ENCODE measurements at regions of chr3 and their contacts with region 1.

Region 1: DNA sequence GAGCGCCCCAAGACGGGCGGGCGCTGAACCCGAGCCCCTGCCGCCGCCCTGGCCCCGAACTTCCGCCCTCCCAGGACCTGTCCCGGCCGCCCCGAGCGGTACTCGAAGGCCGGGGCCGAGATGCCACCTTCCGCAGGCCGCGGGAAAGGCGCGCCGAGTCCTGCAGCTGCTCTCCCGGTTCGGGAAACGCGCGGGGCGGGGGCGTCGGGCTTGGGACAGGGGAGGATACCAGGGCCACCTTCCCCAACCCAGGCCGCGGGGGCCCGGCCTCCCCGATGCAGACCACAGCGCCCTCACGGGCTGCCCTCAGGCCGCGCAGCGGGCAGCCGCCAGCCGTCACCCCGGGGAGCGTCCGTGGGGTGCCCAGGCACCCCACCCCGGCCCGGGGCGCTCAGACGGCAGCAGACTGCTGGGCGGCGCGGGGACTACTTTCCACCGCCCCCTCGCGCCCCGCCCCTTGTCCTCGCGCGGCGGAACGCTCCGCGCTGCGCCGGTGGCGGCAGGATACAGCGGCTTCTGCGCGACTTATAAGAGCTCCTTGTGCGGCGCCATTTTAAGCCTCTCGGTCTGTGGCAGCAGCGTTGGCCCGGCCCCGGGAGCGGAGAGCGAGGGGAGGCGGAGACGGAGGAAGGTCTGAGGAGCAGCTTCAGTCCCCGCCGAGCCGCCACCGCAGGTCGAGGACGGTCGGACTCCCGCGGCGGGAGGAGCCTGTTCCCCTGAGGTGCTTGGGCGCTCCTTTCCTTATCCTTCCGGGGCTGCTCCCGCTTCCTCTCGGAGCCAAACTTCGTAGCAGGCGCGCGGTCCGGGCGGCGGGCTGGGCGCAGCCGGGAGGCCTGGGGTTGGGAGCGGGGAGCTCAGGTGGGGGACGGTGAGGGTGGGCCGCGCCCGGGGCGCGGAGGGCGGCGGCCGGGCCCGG is at the start of gene CTNNB1:
- DNase-seq: peak; percentile 87 to 96 (median 90)
- ATAC-seq: peak; percentile 81
- H3K4me3 ChIP-seq: peak within 1 kb of the TSS; percentile 95 to 98
- H3K4me3 Mint-ChIP-seq: peak within 1 kb of the TSS; percentile 96
- H3K27ac ChIP-seq: peak within 1 kb of the TSS; percentile 88 to 95
- H3K27ac Mint-ChIP-seq: peak within 1 kb of the TSS; percentile 97
- H3K4me1 ChIP-seq: peaks cover 40% of the 10 kb centered on the region
- H3K4me1 Mint-ChIP-seq: peaks cover 37% of the 10 kb centered on the region
- H3K27me3 ChIP-seq: no peaks in the 10 kb centered on the region
- H3K27me3 Mint-ChIP-seq: no peaks in the 10 kb centered on the region
- CTCF ChIP-seq: no peak
- total RNA-seq, gene CTNNB1: 206 to 225 TPM

Region 2: DNA sequence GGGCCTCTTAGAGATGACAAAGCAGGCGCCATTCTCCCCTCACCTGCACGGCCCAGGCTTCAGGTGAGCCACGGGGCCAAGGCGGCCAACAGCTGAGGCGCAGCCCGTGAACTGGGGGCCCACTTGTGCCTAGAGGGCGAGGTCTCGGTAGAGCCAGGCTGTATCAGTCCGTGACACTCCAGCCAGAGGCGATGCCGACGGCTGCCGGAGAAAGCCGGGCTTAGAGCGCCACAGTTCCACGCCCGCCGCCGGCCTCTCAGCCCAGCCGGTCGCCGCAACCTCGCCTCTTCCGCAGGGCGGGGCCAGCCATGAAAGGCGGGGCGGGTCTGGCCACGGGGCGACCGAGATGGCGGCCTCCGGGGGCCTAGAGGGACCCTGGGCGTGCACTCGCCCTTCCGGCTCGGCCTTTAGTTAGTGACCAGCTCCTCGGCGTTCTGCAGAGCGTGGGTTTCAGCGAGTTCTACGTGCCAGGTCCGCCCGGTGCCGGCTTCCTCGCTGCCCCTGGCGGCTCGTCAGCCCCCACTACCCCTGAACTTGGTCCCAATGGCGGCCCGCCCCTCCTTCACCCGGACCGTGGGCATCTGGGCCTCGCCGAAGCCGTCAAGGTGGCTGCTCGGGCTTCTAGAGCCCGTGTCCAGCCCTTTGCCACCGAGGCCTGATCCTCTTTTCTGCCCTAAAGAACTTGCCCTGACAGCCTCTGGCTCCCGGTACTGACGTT is 674.5 kb before region 1 on chr3 and contains the start of gene ZNF621:
- CTCF ChIA-PET with region 1: no interaction called
- POLR2A ChIA-PET with region 1: no interaction called
- intact Hi-C with region 1: loop called in 1 of 2 experiments (anchors 1 kb)
- DNase-seq: peak; percentile 69 to 90 (median 84)
- ATAC-seq: peak; percentile 97
- H3K4me3 ChIP-seq: peak within 1 kb of the TSS; percentile 76 to 97
- H3K4me3 Mint-ChIP-seq: peak within 1 kb of the TSS; percentile 94
- H3K27ac ChIP-seq: peak within 1 kb of the TSS; percentile 80 to 94
- H3K27ac Mint-ChIP-seq: peak within 1 kb of the TSS; percentile 97
- H3K4me1 ChIP-seq: peaks cover 12% of the 10 kb centered on the region
- H3K4me1 Mint-ChIP-seq: peaks cover 38% of the 10 kb centered on the region
- H3K27me3 ChIP-seq: no peaks in the 10 kb centered on the region
- H3K27me3 Mint-ChIP-seq: no peaks in the 10 kb centered on the region
- CTCF ChIP-seq: no peak
- total RNA-seq, gene ZNF621: 7.1 to 9.7 TPM

Region 3: DNA sequence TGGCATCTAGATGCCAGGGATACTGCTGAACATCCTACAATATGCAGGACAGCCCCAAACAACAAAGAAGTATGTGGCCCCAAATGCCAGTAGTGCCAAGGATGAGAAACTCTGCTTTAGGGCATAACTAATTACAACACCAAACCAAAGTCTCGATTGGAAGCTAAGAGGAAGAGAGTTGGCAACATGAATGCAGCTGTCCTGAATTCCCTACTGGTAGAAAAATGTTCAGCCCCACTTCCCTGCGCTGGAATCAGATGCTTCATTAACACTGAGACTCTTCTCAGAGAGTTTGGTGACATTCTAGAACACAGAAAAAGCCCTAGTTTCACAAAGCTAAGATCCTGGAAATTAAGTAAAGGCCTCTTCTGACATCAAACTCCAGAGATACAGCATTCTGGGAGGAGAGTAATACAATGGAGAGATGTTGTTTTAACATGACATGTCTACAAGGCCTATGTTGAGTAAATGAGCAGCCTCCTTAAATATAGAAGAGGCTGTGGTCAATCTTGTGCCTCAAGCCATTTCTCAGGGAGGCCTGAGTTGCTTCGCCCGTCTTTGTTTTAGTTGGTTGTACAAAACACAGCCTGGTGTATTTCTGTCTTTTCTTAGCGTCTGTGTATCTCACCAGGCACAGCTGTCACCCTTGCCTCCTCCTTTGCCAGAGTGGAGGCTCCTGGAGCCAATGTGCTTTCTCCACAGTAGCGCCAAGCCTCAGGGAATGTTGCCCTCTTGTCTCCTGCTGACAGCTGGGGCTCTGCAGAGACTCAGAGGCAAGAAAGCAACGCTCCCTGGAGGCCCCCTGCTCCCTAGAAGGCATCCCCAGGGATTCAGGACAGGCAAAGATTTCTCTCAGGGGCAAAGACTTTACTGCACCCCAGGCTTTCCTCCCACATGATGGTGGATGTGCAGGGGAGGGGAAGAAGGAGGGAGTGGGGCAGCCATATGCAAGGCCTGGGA is 25.0 kb before region 1 on chr3:
- CTCF ChIA-PET with region 1: no interaction called
- POLR2A ChIA-PET with region 1: no interaction called
- intact Hi-C with region 1: no loop called
- DNase-seq: no peak
- ATAC-seq: no peak
- H3K4me3 ChIP-seq: no peak overlapping the region
- H3K4me3 Mint-ChIP-seq: no peak overlapping the region
- H3K27ac ChIP-seq: no peak overlapping the region
- H3K27ac Mint-ChIP-seq: no peak overlapping the region
- H3K4me1 ChIP-seq: no peaks in the 10 kb centered on the region
- H3K4me1 Mint-ChIP-seq: no peaks in the 10 kb centered on the region
- H3K27me3 ChIP-seq: peaks cover 2 to 4% of the 10 kb centered on the region in 2 experiments
- H3K27me3 Mint-ChIP-seq: peaks cover 17% of the 10 kb centered on the region
- CTCF ChIP-seq: no peak

Region 4: GRCh38 chr3:41216993-41217392 is 17.8 kb after region 1 on chr3:
- CTCF ChIA-PET with region 1: interaction called, 4 read pairs
- POLR2A ChIA-PET with region 1: interaction called, 60 read pairs
- intact Hi-C with region 1: loop called (anchors 2 kb)
- DNase-seq: no peak
- ATAC-seq: no peak
- H3K4me3 ChIP-seq: no peak overlapping the region
- H3K4me3 Mint-ChIP-seq: peak overlapping the region; percentile 1
- H3K27ac ChIP-seq: no peak overlapping the region
- H3K27ac Mint-ChIP-seq: peak overlapping the region; percentile 28
- H3K4me1 ChIP-seq: peaks cover 73% of the 10 kb centered on the region
- H3K4me1 Mint-ChIP-seq: peaks cover 91% of the 10 kb centered on the region
- H3K27me3 ChIP-seq: no peaks in the 10 kb centered on the region
- H3K27me3 Mint-ChIP-seq: no peaks in the 10 kb centered on the region
- CTCF ChIP-seq: no peak

Region 5: GRCh38 chr3:41244620-41245336 is 45.6 kb after region 1 on chr3:
- CTCF ChIA-PET with region 1: no interaction called
- POLR2A ChIA-PET with region 1: no interaction called
- intact Hi-C with region 1: loop called (anchors 5 kb)
- DNase-seq: no peak
- ATAC-seq: no peak
- H3K4me3 ChIP-seq: no peak overlapping the region
- H3K4me3 Mint-ChIP-seq: no peak overlapping the region
- H3K27ac ChIP-seq: no peak overlapping the region
- H3K27ac Mint-ChIP-seq: peak overlapping the region; percentile 70
- H3K4me1 ChIP-seq: no peaks in the 10 kb centered on the region
- H3K4me1 Mint-ChIP-seq: no peaks in the 10 kb centered on the region
- H3K27me3 ChIP-seq: no peaks in the 10 kb centered on the region
- H3K27me3 Mint-ChIP-seq: no peaks in the 10 kb centered on the region
- CTCF ChIP-seq: no peak

Region 6: GRCh38 chr3:42012935-42013690 is 813.9 kb after region 1 on chr3:
- CTCF ChIA-PET with region 1: no interaction called
- POLR2A ChIA-PET with region 1: no interaction called
- intact Hi-C with region 1: loop called in 1 of 2 experiments (anchors 5 kb)
- DNase-seq: peak; percentile 56 to 89 (median 71)
- ATAC-seq: peak; percentile 73
- H3K4me3 ChIP-seq: peak overlapping the region; percentile 85 to 89
- H3K4me3 Mint-ChIP-seq: peak overlapping the region; percentile 91
- H3K27ac ChIP-seq: peak overlapping the region; percentile 72 to 98
- H3K27ac Mint-ChIP-seq: peak overlapping the region; percentile 98
- H3K4me1 ChIP-seq: peaks cover 20% of the 10 kb centered on the region
- H3K4me1 Mint-ChIP-seq: peaks cover 35% of the 10 kb centered on the region
- H3K27me3 ChIP-seq: no peaks in the 10 kb centered on the region
- H3K27me3 Mint-ChIP-seq: no peaks in the 10 kb centered on the region
- CTCF ChIP-seq: no peak

Measured in CD8-positive, alpha-beta T cell (primary cell).